Mucosa of descending colon (tissue), 3 donors: ENCODE measurements at regions of chr7 and their contacts with region 1.

Region 1: DNA sequence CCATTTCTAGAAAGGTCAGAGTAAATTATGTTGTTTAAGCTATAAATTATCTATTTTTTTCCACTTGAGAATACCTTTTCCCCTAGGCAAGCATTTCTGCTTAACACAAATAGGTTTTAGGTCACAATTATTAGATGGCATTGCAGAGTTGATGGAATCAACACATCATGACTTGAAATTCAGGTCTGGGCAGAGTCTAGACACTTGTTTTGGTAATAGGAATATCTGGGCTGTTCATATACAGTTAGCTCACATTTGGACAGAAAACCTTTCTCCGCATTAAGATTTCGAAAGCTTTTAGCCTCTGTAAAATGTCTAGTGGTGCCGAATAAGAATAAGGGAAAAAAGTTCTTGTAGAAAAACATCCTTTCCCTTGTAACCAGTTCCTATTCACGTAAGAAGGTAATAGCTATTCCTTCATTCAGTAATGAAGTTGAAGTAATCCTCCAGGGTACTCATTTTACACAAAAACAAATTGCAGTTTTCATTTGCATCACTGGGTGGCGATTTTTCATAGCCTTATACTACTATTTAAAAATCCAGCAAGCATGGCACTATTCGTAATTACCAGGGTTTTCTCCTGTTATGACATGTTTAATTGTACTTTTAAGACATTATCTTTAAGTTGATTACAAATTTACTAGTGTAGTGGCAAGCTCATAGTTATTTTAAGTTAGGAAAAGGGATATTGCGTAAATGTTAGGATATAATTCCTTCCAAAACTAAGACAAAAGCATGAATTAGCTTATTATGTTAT is 37.0 kb downstream of the RPA3 start:
- DNase-seq: peak in 1 of 3 donors; percentile 89
- ATAC-seq: peak; percentile 74
- H3K4me3 ChIP-seq: no peak overlapping the region
- H3K4me1 ChIP-seq: no peaks in the 10 kb centered on the region
- CTCF ChIP-seq: peak; percentile 13

Region 2: DNA sequence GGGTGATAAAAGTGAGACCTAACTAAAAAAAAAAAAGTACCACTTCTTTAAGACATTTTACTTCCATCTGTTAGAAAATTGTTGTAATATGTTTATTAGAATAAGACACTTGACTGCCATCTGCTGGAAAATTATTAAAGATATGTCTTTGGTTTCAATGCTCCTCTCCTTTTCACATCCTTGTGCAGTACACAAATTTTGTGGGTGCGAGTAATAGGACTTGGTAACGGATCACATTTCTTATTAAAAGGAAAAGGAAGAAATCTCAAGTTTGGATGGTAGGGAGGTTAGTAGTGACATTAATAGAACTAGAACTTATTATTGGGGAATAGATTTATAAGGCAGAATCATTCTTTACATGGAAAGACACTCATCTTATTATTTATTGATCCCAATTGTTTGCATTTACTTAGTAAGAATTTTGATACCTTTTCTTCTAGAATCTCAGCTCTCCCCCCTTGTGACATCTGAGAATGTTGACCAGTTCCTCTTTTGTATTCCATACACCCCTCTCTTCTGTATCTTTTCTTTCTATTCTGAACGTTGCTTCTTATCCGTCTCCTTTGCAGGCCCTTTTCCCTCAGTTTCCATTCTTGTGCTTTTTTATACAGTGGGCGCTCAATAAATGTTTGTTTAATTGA is 80.1 kb after region 1 on chr7:
- intact Hi-C with region 1: loop called (anchors 5 to 10 kb)
- DNase-seq: no peak
- ATAC-seq: peak; percentile 42
- H3K4me3 ChIP-seq: no peak overlapping the region
- H3K4me1 ChIP-seq: no peaks in the 10 kb centered on the region
- CTCF ChIP-seq: no peak

Region 3: GRCh38 chr7:8217200-8218068 is 536.1 kb after region 1 on chr7:
- intact Hi-C with region 1: loop called in 1 of 2 experiments (anchors 10 kb)
- DNase-seq: peak in 1 of 3 donors; percentile 74
- ATAC-seq: peak; percentile 73
- H3K4me3 ChIP-seq: no peak overlapping the region
- H3K4me1 ChIP-seq: no peaks in the 10 kb centered on the region
- CTCF ChIP-seq: peak; percentile 28